ENCODE measurements at regions of chr18 and their contacts with region 1.

Region 1: GRCh38 chr18:54671291-54671881 is 80.3 kb downstream of the DYNAP start:
- DNase-seq: no peak
- ATAC-seq: no peak
- H3K4me3 ChIP-seq: no peak overlapping the region
- H3K27ac ChIP-seq: no peak overlapping the region
- H3K4me1 ChIP-seq: no peaks in the 10 kb centered on the region
- H3K27me3 ChIP-seq: no peaks in the 10 kb centered on the region
- CTCF ChIP-seq: peak in 4 of 5 experiments; percentile 13 to 50 (median 30)
- POLR2A ChIP-seq: no peak

Region 2: DNA sequence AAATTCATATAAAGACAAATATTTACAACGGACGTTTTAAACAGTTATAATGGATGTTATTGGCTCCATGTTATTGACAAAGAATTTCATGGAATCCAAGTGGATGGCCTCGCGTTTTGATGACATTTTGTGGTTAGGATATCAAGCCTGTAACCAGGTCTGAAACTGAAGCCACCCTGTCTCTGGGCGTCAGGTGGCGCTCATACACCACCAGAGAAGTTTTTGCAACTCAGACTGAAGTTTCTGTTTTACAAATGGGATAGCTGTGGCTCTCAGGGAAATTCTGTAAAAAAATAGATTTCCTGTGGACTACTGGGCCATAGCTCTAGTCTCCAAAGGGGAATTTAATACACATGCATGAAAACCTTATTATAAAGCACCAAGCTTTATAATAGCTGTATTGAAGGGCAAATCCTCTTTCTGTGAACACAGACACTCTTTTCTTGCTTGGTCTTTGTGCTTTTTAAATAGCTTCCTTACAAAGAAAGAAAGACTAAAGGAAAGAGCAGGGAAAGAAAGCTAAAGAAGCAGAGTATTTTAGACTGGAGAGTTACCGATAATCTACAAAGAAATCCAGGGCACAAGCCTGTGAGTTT is 227.0 kb before region 1 on chr18:
- in situ Hi-C with region 1: loop called in 1 of 4 experiments (anchors 25 kb)
- intact Hi-C with region 1: loop called (anchors 10 kb)
- DNase-seq: no peak
- ATAC-seq: no peak
- H3K4me3 ChIP-seq: no peak overlapping the region
- H3K27ac ChIP-seq: no peak overlapping the region
- H3K4me1 ChIP-seq: no peaks in the 10 kb centered on the region
- H3K27me3 ChIP-seq: no peaks in the 10 kb centered on the region
- CTCF ChIP-seq: peak in 3 of 5 experiments; percentile 28 to 49 (median 41)
- POLR2A ChIP-seq: no peak

Region 3: DNA sequence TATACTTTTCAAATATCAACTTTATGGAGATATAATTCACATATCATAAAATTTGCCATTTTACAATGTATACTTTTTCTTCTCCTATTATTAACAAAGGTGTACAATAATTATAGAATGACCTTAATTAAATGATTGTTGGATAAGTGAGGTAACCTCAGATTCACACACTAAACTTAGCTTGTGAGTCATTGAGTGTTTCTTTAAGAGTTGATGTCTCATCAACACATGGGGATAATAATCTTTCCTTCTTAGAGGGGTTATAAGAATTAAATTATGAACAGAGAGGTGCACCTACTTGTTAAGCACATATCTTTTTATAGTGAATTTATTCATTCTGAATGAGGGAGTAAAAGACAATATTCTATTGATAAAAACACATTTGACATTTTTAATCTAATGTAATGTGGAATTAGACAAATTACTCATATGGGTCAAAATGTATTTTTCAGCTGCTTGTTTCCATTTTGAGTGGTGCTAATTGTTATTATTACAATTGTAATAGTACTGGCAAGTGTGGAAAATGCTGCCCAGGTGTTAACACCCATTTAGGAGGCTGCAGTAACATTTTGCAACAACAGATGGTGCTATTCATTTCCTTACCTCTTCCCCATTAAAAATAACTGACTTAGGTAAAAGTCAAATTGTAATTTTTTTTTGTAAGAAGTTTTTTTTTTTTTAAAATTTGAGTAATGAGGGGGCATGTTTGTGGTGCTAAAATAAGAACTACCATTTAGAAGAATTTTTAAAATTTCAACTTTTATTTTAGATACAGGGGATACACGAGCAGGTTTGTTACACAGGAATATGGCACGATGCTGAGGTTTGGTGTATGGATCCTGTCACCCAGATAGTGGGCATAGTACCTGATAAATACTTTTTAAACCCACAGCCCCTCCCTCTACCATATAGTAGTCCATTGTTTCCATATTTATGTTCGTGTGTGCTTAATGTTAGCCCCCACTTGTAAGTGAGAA is 112.5 kb before region 1 on chr18:
- in situ Hi-C with region 1: no loop called
- intact Hi-C with region 1: loop called (anchors 5 kb)
- DNase-seq: no peak
- ATAC-seq: peak in 1 of 2 donors; percentile 72
- H3K4me3 ChIP-seq: no peak overlapping the region
- H3K27ac ChIP-seq: no peak overlapping the region
- H3K4me1 ChIP-seq: no peaks in the 10 kb centered on the region
- H3K27me3 ChIP-seq: no peaks in the 10 kb centered on the region
- CTCF ChIP-seq: peak in 4 of 5 experiments; percentile 12 to 50 (median 32)
- POLR2A ChIP-seq: no peak

Region 4: DNA sequence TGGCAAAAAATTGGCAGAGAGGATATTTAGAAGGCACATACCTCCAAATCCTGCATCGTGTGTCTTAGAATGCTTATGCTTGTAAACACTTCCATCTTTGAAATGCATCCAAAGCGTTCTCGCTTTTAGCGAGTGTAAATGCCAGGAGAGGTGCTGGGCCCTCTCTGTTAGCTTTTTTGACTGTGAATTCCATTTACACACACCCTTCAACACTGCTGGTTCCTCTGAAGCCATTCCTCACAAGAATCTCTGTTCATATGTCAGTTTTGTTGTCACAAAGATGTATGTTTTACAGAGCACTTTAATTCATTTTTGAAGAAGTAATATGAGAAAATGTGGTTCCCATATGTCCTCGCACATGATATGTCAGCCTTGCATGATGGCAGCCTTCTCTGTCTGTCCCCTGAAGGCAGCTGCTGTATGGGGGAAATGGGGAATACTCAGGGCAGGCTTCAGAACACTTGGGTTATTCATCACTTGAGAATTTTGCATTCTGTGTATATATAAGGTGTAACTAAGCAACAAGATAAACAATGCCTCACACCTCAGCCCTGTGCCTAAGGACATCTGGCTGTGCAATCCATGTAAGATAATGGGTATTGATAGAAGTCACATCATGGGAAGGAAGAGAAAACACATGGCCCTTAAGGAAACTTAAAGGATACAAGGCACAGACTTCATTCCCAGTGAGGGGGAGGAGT is 209.2 kb after region 1 on chr18:
- in situ Hi-C with region 1: no loop called
- intact Hi-C with region 1: no loop called
- DNase-seq: no peak
- ATAC-seq: no peak
- H3K4me3 ChIP-seq: no peak overlapping the region
- H3K27ac ChIP-seq: no peak overlapping the region
- H3K4me1 ChIP-seq: no peaks in the 10 kb centered on the region
- H3K27me3 ChIP-seq: no peaks in the 10 kb centered on the region
- CTCF ChIP-seq: no peak
- POLR2A ChIP-seq: no peak

Region 5: DNA sequence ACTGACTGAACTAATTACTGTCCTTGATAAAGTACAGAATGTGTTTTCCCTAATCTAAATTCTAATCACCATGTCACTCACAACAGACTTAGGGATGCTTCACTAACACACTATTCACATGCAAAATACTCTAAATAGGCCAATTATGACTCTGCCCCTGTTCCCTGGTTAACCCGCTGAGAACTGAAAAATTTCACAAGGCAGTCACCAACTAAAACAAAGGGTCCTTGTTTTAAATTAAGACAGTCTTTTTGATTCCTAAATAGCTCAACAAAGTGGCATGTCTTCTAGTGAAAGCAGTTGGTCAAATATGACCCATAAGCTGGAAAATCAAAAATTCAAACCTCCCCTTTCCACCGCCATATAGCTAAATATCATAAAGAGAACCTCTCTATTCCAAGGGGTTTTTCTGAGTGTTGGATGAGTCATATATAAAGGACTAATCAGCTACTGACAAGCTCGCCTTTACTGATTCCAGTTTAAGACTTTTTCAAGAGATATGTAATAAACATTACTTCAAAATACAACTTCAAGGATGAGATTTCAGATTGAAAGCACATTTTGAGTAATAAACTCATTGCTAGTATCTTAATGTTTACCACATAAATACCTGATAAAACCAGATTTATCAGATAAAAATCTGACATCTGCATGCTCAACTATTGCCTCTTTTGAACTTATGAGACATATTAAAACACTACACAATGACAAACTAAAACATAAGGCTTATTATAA is 680.8 kb after region 1 on chr18:
- in situ Hi-C with region 1: no loop called
- intact Hi-C with region 1: no loop called
- DNase-seq: no peak
- ATAC-seq: no peak
- H3K4me3 ChIP-seq: no peak overlapping the region
- H3K27ac ChIP-seq: no peak overlapping the region
- H3K4me1 ChIP-seq: peaks cover 12 to 27% of the 10 kb centered on the region in 2 donors
- H3K27me3 ChIP-seq: no peaks in the 10 kb centered on the region
- CTCF ChIP-seq: no peak
- POLR2A ChIP-seq: no peak